ENCODE measurements at regions of chr4 and their contacts with region 1.

Region 1: DNA sequence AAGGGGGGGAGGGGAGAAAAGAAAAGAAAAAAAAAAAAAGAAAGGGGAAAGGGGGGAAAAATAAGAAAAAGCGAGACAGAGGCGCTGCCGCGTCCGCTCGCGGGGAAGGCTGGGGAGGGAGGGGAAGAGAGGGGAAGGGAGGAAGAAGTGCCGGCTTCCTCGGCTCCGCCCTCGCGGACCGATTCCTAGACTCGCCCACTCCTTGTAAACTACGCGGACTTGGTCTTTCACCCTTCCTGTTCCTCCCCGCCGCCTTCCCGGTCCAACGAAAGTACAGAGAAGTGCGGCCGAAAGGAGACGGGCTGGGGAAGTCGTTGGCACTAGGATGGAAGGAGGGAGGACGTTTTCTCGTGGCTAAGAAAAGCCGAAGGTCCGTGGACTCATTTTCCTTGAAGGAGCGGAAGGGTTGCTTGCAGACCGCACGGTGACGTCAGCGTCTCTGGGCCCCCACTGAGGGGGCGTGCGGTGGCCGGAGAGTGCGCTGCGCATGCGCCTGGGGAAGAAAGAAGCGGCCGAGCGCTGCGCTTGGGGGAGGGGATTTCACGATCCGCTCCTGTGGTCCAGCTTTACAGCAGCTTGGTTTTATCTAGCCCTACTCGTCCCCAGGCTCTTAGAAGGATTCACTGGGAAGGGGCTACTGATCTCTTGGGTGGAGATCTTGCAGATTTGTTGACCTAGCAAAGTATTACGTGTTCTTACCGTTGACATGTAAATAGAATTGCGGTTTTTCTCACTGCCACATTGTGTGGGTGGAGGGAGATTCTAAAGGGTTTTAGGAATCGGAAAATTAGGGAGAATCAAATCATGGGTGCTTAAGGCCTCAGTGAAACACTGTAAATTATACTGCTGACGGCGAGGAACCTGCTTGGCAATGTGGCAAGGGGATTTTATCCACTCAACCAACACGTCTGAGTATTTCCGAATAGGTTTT is at the start of gene CCNI:
- DNase-seq: peak; percentile 97
- ATAC-seq: peak; percentile 77
- H3K4me3 Mint-ChIP-seq: no peak within 1 kb of the TSS
- H3K27ac Mint-ChIP-seq: peak within 1 kb of the TSS; percentile 100
- H3K4me1 Mint-ChIP-seq: peaks cover 24% of the 10 kb centered on the region
- H3K27me3 Mint-ChIP-seq: no peaks in the 10 kb centered on the region
- total RNA-seq, gene CCNI: 243 to 244 TPM

Region 2: GRCh38 chr4:77022560-77023179 is 53.5 kb before region 1 on chr4:
- POLR2A ChIA-PET with region 1: no interaction called
- DNase-seq: no peak
- ATAC-seq: no peak
- H3K4me3 Mint-ChIP-seq: no peak overlapping the region
- H3K27ac Mint-ChIP-seq: no peak overlapping the region
- H3K4me1 Mint-ChIP-seq: peaks cover 17% of the 10 kb centered on the region
- H3K27me3 Mint-ChIP-seq: no peaks in the 10 kb centered on the region

Region 3: GRCh38 chr4:77044461-77045150 is 31.5 kb before region 1 on chr4:
- POLR2A ChIA-PET with region 1: no interaction called
- DNase-seq: no peak
- ATAC-seq: peak; percentile 34
- H3K4me3 Mint-ChIP-seq: no peak overlapping the region
- H3K27ac Mint-ChIP-seq: no peak overlapping the region
- H3K4me1 Mint-ChIP-seq: peaks cover 3% of the 10 kb centered on the region
- H3K27me3 Mint-ChIP-seq: no peaks in the 10 kb centered on the region

Region 4: DNA sequence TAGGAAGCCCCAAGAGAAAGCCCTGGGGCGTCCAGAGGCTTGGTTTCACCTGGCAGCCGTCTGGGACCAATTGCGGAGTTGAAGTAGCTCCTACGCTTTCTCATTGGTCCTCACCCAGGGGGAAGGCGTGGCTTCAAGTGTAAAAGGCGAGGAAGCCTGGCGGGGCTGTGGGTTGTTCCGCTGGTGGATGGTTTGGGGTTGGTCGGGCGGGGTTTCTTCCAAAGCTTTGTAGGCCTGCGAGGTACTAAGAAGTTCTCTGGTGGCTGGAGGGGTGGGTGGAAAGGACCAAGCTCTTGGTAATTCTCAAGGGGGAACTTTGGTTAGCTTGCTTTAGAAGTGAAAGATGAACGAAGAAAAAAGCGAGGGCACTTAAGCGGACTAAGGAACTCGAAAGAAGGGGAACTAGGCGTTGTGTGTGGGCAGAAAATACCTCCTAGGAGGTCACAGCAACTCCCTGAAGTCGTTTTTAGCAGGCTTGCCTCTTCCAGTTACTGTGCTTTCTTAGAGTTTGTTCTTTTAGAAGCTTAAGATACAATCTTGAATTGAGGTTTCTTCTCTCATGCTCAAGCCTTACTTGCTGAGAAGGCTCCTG is 117.5 kb after region 1 on chr4:
- POLR2A ChIA-PET with region 1: interaction called, 10 read pairs
- DNase-seq: peak; percentile 71
- ATAC-seq: peak; percentile 100
- H3K4me3 Mint-ChIP-seq: peak overlapping the region; percentile 88
- H3K27ac Mint-ChIP-seq: peak overlapping the region; percentile 87
- H3K4me1 Mint-ChIP-seq: peaks cover 21% of the 10 kb centered on the region
- H3K27me3 Mint-ChIP-seq: peaks cover 2% of the 10 kb centered on the region

Region 5: DNA sequence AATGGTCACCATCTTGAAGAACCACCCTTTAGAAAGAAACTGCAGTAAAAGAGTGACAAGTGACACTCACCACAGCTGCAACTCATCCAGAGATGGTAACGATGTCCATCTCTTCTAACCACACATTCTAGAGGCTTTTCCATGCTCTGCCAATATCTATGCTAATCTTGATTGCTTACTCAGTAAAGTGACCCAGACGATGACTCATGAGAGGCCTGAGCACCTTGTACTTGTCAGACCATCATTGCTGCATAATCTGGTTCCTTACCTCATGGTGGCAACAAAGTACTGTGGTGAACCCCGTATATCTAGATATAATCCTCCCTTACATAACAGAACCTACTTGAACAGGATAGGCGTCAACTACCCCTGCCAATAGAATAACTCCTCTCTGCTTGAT is 156.5 kb after region 1 on chr4:
- POLR2A ChIA-PET with region 1: no interaction called
- DNase-seq: no peak
- ATAC-seq: no peak
- H3K4me3 Mint-ChIP-seq: no peak overlapping the region
- H3K27ac Mint-ChIP-seq: no peak overlapping the region
- H3K4me1 Mint-ChIP-seq: peaks cover 2% of the 10 kb centered on the region
- H3K27me3 Mint-ChIP-seq: no peaks in the 10 kb centered on the region

Region 6: GRCh38 chr4:77251751-77252150 is 175.6 kb after region 1 on chr4:
- POLR2A ChIA-PET with region 1: no interaction called
- DNase-seq: no peak
- ATAC-seq: no peak
- H3K4me3 Mint-ChIP-seq: no peak overlapping the region
- H3K27ac Mint-ChIP-seq: no peak overlapping the region
- H3K4me1 Mint-ChIP-seq: no peaks in the 10 kb centered on the region
- H3K27me3 Mint-ChIP-seq: no peaks in the 10 kb centered on the region